Activated naive CD4-positive, alpha-beta T cell treated with anti-CD3 and anti-CD28 coated beads for 36 hours (primary cell): ENCODE measurements at regions of chr20 and their contacts with region 1.

Region 1: GRCh38 chr20:2451939-2452732 is 18.5 kb downstream of the SNRPB start:
- DNase-seq: peak; percentile 85
- H3K4me3 Mint-ChIP-seq: no peak overlapping the region
- H3K27ac Mint-ChIP-seq: no peak overlapping the region
- H3K4me1 Mint-ChIP-seq: peaks cover 37% of the 10 kb centered on the region
- H3K27me3 Mint-ChIP-seq: no peaks in the 10 kb centered on the region

Region 2: GRCh38 chr20:1965520-1966351 is 486.4 kb before region 1 on chr20:
- CTCF ChIA-PET with region 1: interaction called, 7 read pairs
- intact Hi-C with region 1: loop called (anchors 5 kb)
- DNase-seq: peak; percentile 89
- H3K4me3 Mint-ChIP-seq: peak overlapping the region; percentile 54
- H3K27ac Mint-ChIP-seq: peak overlapping the region; percentile 43
- H3K4me1 Mint-ChIP-seq: peaks cover 14% of the 10 kb centered on the region
- H3K27me3 Mint-ChIP-seq: peaks cover 23% of the 10 kb centered on the region

Region 3: GRCh38 chr20:2206957-2207769 is 245.0 kb before region 1 on chr20:
- CTCF ChIA-PET with region 1: interaction called, 25 read pairs
- intact Hi-C with region 1: loop called (anchors 1 kb)
- DNase-seq: peak; percentile 75
- H3K4me3 Mint-ChIP-seq: peak overlapping the region; percentile 71
- H3K27ac Mint-ChIP-seq: no peak overlapping the region
- H3K4me1 Mint-ChIP-seq: peaks cover 2% of the 10 kb centered on the region
- H3K27me3 Mint-ChIP-seq: peaks cover 6% of the 10 kb centered on the region

Region 4: GRCh38 chr20:2387180-2387577 is 65.0 kb before region 1 on chr20:
- CTCF ChIA-PET with region 1: interaction called, 28 read pairs
- intact Hi-C with region 1: loop called (anchors 1 kb)
- DNase-seq: peak; percentile 74
- H3K4me3 Mint-ChIP-seq: no peak overlapping the region
- H3K27ac Mint-ChIP-seq: no peak overlapping the region
- H3K4me1 Mint-ChIP-seq: peaks cover 4% of the 10 kb centered on the region
- H3K27me3 Mint-ChIP-seq: no peaks in the 10 kb centered on the region

Region 5: GRCh38 chr20:2430538-2430937 is 21.6 kb before region 1 on chr20:
- CTCF ChIA-PET with region 1: interaction called, 10 read pairs
- intact Hi-C with region 1: no loop called
- DNase-seq: no peak
- H3K4me3 Mint-ChIP-seq: no peak overlapping the region
- H3K27ac Mint-ChIP-seq: no peak overlapping the region
- H3K4me1 Mint-ChIP-seq: no peaks in the 10 kb centered on the region
- H3K27me3 Mint-ChIP-seq: peaks cover 3% of the 10 kb centered on the region